PC-3 (cell line): ENCODE measurements at regions of chr1 and their contacts with region 1.

Region 1: GRCh38 chr1:28779751-28780408 is 32.1 kb upstream of the OPRD1 start:
- DNase-seq: no peak
- ATAC-seq: no peak
- H3K4me3 ChIP-seq: no peak overlapping the region
- H3K27ac ChIP-seq: no peak overlapping the region
- H3K4me1 ChIP-seq: no peaks in the 10 kb centered on the region
- H3K27me3 ChIP-seq: no peaks in the 10 kb centered on the region
- CTCF ChIP-seq: no peak

Region 2: DNA sequence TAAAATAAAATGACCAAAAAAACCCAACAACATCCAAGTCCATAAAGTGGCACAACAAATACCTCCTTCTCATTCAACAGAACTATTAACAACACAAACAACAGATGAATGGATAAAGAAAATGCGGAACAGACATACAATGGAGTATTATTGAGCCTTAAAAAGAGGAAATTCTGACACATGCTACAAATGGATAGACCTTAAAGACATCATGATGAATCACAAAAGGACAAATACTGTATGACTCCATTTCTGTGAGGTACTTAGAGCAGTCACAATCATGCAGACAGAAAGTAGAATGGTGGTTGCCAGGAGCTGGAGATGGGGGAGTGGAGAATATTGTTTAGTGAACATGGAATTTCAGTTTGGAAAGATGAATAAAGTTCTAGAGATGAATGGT is 734.1 kb before region 1 on chr1:
- CTCF ChIA-PET with region 1: no interaction called
- POLR2A ChIA-PET with region 1: no interaction called
- intact Hi-C with region 1: no loop called
- DNase-seq: peak; percentile 52
- ATAC-seq: peak; percentile 80
- H3K4me3 ChIP-seq: no peak overlapping the region
- H3K27ac ChIP-seq: 0 out of 2 replicates have a peak overlapping the region, but pooled peaks have one; percentile 7
- H3K4me1 ChIP-seq: no peaks in the 10 kb centered on the region
- H3K27me3 ChIP-seq: no peaks in the 10 kb centered on the region
- CTCF ChIP-seq: no peak

Region 3: DNA sequence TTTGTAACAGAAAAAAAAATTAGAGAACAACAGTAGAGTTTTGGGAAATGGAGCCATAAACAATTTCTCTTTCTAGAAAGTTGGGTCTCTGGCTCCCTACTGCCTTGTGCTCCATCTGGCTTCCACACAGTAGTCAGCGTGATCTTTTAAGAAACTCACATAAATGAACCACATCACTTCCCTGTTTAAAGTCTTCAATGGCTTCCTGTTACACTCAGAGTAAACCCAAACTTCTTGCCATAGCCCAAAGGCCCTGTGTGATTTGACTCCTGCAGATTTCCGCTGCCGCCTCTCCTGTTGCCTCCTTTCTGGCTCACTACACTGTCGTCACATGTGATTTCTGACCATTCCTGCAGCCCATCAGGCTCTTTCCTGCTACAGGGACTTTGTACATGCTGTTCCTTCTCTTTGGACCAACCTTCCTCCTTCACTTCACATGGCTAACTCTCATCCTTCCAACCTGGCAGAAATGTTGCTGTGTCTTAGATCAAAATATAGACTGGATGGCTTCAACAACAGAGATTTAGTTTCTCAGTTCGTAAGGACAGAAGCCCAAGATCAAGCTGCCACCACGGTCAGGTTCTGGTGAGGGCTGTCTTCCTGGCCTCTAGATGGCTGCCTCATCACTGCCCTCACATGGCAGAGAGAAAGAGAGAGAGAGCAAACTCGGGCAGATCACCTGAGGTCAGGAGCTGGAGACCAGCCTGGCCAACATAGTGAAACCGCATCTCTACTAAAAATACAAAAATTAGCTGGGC is 66.1 kb after region 1 on chr1:
- CTCF ChIA-PET with region 1: no interaction called
- POLR2A ChIA-PET with region 1: no interaction called
- intact Hi-C with region 1: loop called (anchors 2 kb)
- DNase-seq: peak; percentile 65
- ATAC-seq: peak; percentile 89
- H3K4me3 ChIP-seq: no peak overlapping the region
- H3K27ac ChIP-seq: no peak overlapping the region
- H3K4me1 ChIP-seq: peaks cover 3% of the 10 kb centered on the region; the same call in 1 of the 2 replicates
- H3K27me3 ChIP-seq: no peaks in the 10 kb centered on the region
- CTCF ChIP-seq: peak; percentile 55

Region 4: DNA sequence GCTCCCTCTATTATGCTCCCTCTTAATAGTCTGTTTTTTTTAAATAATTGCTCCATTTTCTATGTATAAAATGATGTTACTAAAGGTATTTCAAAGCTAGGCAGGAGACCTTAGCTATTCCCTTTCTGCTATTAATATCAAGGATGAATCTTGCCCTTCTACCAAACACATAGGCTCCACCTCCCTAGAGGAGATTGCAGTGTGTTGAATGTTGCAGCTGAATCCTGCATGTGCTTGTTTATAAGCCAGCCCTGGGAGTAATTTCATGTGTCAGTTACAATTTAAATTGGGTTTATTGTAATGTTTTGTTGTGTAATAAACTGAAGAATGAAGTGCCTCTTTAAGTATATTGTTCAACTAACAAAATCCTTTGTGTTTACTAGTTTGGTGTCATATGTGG is 277.8 kb after region 1 on chr1:
- CTCF ChIA-PET with region 1: interaction called, 13 read pairs
- POLR2A ChIA-PET with region 1: no interaction called
- intact Hi-C with region 1: no loop called
- DNase-seq: no peak
- ATAC-seq: no peak
- H3K4me3 ChIP-seq: no peak overlapping the region
- H3K27ac ChIP-seq: no peak overlapping the region
- H3K4me1 ChIP-seq: no peaks in the 10 kb centered on the region
- H3K27me3 ChIP-seq: no peaks in the 10 kb centered on the region
- CTCF ChIP-seq: no peak